Kidney (tissue), 22 donors: ENCODE measurements at regions of chr2 and their contacts with region 1.

Region 1: DNA sequence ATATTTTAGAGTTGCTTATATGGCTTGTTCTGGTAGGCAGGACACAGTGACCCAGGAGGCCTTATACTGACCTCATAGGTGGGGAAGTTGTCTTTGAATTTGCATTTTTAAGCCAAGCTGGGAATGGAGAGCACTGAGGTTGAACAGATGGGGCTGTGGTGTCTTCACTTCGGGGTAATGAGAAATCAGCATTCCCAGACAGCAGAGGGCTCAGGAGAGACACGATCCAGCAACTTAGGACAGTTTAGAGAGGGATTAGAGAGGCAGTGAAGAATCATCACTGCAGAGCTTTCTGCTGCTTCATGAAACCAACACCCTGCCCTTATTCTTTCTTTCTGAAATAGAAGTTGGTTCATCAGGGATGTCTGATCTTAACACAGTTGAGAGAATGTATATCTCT is 202.4 kb downstream of the TDRD15 start:
- DNase-seq: peak in 2 of 5 donors; percentile 25 to 34
- H3K4me3 ChIP-seq: no peak overlapping the region
- H3K27ac ChIP-seq: no peak overlapping the region
- H3K4me1 ChIP-seq: no peaks in the 10 kb centered on the region
- H3K27me3 ChIP-seq: no peaks in the 10 kb centered on the region
- CTCF ChIP-seq: no peak

Region 2: GRCh38 chr2:21175895-21176646 is 150.1 kb before region 1 on chr2:
- intact Hi-C with region 1: loop called (anchors 10 kb)
- DNase-seq: peak in 2 of 5 donors; percentile 52 to 53
- H3K4me3 ChIP-seq: peak overlapping the region in 1 of 3 donors; percentile 35
- H3K27ac ChIP-seq: no peak overlapping the region
- H3K4me1 ChIP-seq: no peaks in the 10 kb centered on the region
- H3K27me3 ChIP-seq: no peaks in the 10 kb centered on the region
- CTCF ChIP-seq: peak; percentile 25